ENCODE measurements at regions of chr13 and their contacts with region 1.

Region 1: DNA sequence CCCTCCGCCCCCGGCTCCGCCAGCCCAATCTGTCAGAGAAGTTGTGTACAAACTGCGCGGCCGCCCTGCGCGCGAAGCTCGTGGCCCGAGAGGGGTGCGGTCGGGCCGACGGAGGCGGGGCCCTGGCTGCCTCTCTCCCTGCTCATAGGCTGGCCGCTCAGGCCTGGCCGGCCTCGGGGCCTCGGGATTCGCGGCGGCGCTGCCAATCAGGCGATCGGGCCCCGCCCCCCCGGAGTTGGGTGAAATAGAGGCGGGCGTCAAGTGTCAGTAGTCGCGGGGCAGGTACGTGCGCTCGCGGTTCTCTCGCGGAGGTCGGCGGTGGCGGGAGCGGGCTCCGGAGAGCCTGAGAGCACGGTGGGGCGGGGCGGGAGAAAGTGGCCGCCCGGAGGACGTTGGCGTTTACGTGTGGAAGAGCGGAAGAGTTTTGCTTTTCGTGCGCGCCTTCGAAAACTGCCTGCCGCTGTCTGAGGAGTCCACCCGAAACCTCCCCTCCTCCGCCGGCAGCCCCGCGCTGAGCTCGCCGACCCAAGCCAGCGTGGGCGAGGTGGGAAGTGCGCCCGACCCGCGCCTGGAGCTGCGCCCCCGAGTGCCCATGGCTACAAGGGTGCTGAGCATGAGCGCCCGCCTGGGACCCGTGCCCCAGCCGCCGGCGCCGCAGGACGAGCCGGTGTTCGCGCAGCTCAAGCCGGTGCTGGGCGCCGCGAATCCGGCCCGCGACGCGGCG is at the start of gene KLF5:
- DNase-seq: peak; percentile 95
- H3K4me3 Mint-ChIP-seq: peak within 1 kb of the TSS; percentile 80
- H3K27ac Mint-ChIP-seq: peak within 1 kb of the TSS; percentile 49
- H3K4me1 Mint-ChIP-seq: peaks cover 12% of the 10 kb centered on the region
- H3K27me3 Mint-ChIP-seq: peaks cover 63% of the 10 kb centered on the region
- total RNA-seq, gene KLF5: 1.3 and 2.0 TPM in 2 replicates

Region 2: DNA sequence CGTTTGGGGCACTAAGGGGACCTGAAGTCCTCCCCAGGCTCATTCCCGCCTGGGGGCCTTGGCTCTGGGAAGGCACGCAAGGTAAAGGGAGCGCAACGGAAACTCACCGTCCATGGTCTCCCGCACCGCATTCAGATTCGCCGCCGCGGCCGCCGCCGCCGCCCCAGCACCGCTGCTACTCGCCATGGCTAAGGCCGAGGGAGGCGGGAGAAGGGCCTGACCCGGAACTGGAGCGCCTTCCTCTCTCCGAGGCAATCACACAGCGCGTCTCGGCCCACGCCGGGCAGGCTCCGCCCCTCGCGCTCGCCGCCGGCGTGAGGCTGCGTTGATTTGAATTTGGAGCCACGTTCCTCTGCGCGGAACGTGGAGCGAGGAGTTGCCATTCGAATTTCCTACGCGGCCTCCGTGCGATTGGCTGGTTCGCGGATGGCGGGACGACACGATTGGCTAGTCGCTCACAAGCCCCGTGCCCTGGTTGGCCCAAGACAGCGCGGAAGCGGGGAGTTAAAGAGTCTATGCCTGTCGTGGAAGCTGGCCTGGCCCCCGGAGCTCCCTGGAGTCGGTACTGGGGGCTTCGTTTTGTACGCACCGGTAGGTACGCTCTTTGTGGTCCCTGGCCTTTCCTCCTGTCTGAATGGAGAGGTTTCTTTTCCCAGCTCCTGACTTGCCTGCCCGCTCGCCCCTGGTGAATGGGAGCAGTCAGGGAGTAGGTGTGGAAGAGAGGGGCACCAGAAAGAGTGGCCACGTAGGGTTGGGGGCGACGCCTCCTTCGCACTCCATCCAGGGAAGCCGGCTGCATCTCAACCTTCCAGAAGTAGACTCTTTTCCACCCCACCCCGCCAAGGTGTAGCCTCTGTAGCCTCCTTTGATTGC is 331.2 kb before region 1 on chr13 and contains the starts of genes BORA and MZT1:
- intact Hi-C with region 1: loop called (anchors 5 kb)
- DNase-seq: peak; percentile 96
- H3K4me3 Mint-ChIP-seq: peak within 1 kb of the TSS; percentile 95
- H3K27ac Mint-ChIP-seq: peak within 1 kb of the TSS; percentile 87
- H3K4me1 Mint-ChIP-seq: peaks cover 49% of the 10 kb centered on the region
- H3K27me3 Mint-ChIP-seq: no peaks in the 10 kb centered on the region
- total RNA-seq, gene BORA: 18.3 and 18.4 TPM in 2 replicates
- total RNA-seq, gene MZT1: 20.9 and 21.1 TPM in 2 replicates

Region 3: DNA sequence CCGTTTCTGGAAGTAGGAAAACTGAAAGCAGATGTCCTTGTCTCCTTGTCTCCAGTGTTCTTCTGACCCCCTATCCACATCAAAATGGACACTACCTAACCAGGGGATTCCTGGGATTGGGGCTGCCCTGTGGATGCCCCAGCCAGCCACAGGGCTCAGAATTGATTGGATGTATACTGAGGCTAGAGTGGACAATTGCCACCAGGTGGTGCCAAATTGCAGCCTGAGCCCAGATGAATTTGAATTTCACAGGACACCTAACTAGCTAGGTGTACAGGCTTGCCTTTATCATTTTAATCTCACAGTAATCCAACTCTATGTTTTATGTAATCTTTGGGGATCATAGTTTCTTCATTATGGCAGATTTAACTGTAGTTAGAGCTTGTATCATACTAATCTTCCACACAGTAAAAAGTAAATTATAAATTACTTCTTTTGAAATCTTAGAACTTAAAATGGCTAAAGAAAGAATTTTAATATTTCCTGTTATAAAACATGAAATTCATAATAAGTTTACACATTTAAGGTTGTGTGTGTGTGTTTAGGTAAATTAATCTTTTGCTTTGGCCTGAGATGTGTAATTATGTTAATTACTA is 219.0 kb before region 1 on chr13:
- intact Hi-C with region 1: loop called (anchors 2 kb)
- DNase-seq: no peak
- H3K4me3 Mint-ChIP-seq: no peak overlapping the region
- H3K27ac Mint-ChIP-seq: no peak overlapping the region
- H3K4me1 Mint-ChIP-seq: peaks cover 1% of the 10 kb centered on the region
- H3K27me3 Mint-ChIP-seq: no peaks in the 10 kb centered on the region

Region 4: GRCh38 chr13:73223372-73223781 is 164.5 kb after region 1 on chr13:
- intact Hi-C with region 1: loop called (anchors 5 kb)
- DNase-seq: peak; percentile 22
- H3K4me3 Mint-ChIP-seq: no peak overlapping the region
- H3K27ac Mint-ChIP-seq: no peak overlapping the region
- H3K4me1 Mint-ChIP-seq: peaks cover 27% of the 10 kb centered on the region
- H3K27me3 Mint-ChIP-seq: peaks cover 36% of the 10 kb centered on the region

Region 5: DNA sequence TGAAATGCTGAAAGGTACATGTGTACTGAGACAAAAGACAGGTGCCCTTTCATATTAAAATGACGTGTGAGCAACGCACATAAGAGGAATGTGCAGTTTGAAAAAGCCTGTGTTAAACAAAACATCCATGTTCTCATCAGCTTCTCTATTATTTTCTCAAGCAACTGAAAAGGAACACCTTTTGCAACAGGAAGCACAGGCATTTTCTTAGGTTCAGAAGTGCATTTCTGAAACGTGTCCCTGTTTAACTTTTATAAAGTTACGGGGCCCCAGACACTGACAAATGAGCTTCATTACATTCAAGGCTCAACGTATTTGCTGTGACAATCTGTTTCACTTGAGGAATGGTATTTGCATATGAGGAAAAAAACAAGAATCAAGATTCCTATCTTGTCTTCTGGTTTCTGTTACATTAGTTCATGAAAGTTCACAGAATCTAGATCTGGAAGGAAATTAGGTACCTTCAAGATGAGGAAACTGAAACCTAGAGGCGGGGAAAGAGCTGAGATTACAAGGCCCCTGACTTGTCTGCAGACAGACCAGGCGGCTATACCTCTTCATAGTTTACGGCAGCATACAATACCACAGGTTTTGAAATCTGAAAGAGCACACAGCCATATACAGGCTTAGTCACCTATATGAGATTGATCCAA is 643.6 kb after region 1 on chr13:
- intact Hi-C with region 1: loop called (anchors 5 kb)
- DNase-seq: peak; percentile 41
- H3K4me3 Mint-ChIP-seq: no peak overlapping the region
- H3K27ac Mint-ChIP-seq: peak overlapping the region; percentile 60
- H3K4me1 Mint-ChIP-seq: peaks cover 34% of the 10 kb centered on the region
- H3K27me3 Mint-ChIP-seq: no peaks in the 10 kb centered on the region

Measured in activated T-helper 2 cell treated with anti-CD3 and anti-CD28 coated beads, Interferon-gamma antibody, Interleukin-2, Interleukin-4, amounts not matched to agents 10 μg/mL and 5 μg/mL and 100 μg/mL, durations not matched to agents 14 hours and 24 hours and 36 hours (primary cell).